Aorta (tissue), 5 donors: ENCODE measurements at regions of chrX and their contacts with region 1.

Region 1: DNA sequence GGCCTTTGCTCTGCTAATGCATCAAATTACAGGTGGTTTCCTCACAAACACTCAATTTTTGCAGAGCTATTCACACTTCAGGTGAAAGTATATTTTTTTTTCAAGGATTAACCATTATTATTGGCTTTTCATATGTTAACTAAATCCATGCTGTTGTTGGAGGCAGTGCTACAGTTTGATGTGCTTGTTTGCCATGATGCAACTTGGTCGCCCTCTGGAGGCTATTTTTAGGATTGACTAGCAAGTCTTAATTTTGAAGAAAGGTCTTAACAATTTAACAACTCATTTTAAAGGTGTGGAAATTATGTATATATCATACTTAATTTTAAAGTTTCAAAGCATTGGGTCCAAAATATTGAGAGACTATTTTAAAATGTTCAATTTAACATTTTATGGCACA is 168.8 kb upstream of the FAM47A start:
- DNase-seq: no peak
- ATAC-seq: no peak
- H3K4me3 ChIP-seq: no peak overlapping the region
- H3K27ac ChIP-seq: no peak overlapping the region
- H3K4me1 ChIP-seq: no peaks in the 10 kb centered on the region
- H3K27me3 ChIP-seq: no peaks in the 10 kb centered on the region

Region 2: DNA sequence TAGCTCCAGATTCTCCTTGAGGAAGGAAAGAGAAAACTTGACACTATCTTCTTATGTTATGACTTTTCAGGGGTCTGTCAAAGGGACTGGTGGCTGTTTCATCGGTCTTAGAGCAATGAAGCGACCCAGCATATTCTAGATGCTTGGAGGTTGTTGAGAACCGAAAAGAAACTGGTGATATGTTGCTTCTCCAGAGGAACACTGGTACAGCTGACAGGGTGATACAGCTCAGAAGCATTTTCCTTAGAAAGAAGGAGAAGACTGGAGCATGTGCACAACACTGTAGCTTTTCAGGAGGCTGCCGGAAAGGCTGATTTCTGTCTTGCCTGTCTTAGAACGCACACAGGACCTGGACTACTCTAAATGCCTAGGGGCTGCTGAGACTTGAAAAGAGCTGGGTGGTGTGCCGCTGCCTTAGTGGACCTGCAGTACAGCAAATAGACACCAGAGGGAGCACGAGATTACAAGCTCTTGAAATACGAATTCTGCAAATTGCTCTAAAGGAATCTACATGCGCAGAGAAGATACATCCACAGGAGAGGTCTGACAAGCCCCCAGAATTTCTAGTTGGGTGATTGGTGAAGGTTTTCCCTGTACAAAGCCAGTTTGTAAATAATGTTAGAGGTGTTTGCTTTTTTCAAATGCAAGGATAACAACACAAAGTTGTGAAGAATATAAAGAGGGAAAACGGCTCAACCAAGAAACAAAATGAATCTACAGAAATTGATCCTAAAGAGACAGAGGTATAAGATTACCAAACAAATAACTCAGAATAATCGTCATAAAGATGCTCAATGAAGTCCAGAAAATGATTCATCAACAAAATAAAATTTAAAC is 866.4 kb before region 1 on chrX:
- intact Hi-C with region 1: loop called (anchors 2 to 5 kb)
- DNase-seq: no peak
- ATAC-seq: peak; percentile 76
- H3K4me3 ChIP-seq: peak overlapping the region; percentile 1 to 59
- H3K27ac ChIP-seq: no peak overlapping the region
- H3K4me1 ChIP-seq: no peaks in the 10 kb centered on the region
- H3K27me3 ChIP-seq: no peaks in the 10 kb centered on the region

Region 3: GRCh38 chrX:35880601-35881000 is 1579.7 kb after region 1 on chrX:
- intact Hi-C with region 1: no loop called
- DNase-seq: no peak
- ATAC-seq: no peak
- H3K4me3 ChIP-seq: no peak overlapping the region
- H3K27ac ChIP-seq: no peak overlapping the region
- H3K4me1 ChIP-seq: no peaks in the 10 kb centered on the region
- H3K27me3 ChIP-seq: no peaks in the 10 kb centered on the region